ENCODE measurements at regions of chr11 and their contacts with region 1.

Region 1: DNA sequence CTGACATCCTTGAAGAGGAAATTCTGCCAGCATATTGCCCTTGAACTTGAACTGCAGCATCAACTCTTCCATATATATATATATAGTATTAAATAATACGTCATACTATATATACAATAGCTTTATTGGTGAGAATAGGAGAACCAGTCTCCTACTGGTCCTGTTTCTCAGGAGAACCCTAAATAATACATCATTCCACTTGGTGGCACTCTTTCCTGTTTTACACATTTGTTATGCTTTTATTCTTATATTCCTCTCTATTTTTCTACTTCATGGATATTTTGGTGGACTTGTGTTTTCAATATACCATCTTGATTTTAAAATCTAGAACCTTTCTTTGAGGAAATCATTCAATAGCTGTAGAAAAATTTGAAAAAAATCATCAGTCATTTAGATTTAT is 193.3 kb downstream of the TRPC6 start:
- DNase-seq: no peak
- ATAC-seq: no peak
- H3K4me3 ChIP-seq: no peak overlapping the region
- H3K4me1 ChIP-seq: no peaks in the 10 kb centered on the region
- CTCF ChIP-seq: no peak

Region 2: GRCh38 chr11:100823360-100823759 is 567.2 kb before region 1 on chr11:
- intact Hi-C with region 1: no loop called
- DNase-seq: no peak
- ATAC-seq: no peak
- H3K4me3 ChIP-seq: no peak overlapping the region
- H3K4me1 ChIP-seq: no peaks in the 10 kb centered on the region
- CTCF ChIP-seq: no peak

Region 3: DNA sequence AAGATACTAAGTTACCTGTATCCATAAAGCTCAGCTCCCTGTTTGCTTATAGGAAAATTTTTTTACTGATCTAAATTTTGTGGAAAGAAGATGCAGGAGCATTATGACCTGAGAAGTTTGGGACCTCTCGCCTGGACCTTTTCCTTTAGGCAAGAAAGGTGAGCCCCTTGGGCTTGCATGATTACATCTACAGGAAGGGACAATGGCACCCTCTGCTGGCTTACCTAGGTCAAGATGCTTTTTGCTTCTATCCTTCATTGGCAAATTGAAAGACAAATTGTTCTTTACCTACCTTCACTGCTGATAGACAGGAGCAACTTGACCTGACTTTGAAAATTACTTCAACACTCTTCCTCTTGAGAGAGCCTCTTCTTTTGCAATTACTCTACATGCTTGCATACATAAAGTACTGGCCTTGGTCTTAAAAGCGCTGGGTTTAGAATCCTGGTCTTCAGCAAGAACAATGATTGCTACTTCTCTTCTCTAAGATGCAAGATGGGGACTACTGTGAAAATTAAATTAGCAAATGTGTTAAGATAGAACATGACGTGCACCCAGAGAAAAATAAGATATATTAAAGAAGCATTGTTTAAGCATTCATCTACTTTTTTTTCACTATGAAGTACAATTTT is 46.1 kb after region 1 on chr11:
- intact Hi-C with region 1: loop called in 1 of 2 experiments (anchors 5 kb)
- DNase-seq: peak in 1 of 3 donors; percentile 69
- ATAC-seq: peak; percentile 29
- H3K4me3 ChIP-seq: no peak overlapping the region
- H3K4me1 ChIP-seq: no peaks in the 10 kb centered on the region
- CTCF ChIP-seq: peak; percentile 21

Measured in mucosa of descending colon (tissue), 3 donors.